Dendritic cell treated with granulocyte-macrophage colony-stimulating factor and Interleukin-4, amounts not matched to agents 40 ng/mL and 50 ng/mL, for 4 days (primary cell): ENCODE measurements at regions of chr6 and their contacts with region 1.

Region 1: GRCh38 chr6:73675466-73676098 is 20.4 kb upstream of the CD109 start:
- H3K4me3 Mint-ChIP-seq: no peak overlapping the region
- H3K27ac Mint-ChIP-seq: no peak overlapping the region
- H3K4me1 Mint-ChIP-seq: peaks cover 8% of the 10 kb centered on the region
- H3K27me3 Mint-ChIP-seq: no peaks in the 10 kb centered on the region

Region 2: DNA sequence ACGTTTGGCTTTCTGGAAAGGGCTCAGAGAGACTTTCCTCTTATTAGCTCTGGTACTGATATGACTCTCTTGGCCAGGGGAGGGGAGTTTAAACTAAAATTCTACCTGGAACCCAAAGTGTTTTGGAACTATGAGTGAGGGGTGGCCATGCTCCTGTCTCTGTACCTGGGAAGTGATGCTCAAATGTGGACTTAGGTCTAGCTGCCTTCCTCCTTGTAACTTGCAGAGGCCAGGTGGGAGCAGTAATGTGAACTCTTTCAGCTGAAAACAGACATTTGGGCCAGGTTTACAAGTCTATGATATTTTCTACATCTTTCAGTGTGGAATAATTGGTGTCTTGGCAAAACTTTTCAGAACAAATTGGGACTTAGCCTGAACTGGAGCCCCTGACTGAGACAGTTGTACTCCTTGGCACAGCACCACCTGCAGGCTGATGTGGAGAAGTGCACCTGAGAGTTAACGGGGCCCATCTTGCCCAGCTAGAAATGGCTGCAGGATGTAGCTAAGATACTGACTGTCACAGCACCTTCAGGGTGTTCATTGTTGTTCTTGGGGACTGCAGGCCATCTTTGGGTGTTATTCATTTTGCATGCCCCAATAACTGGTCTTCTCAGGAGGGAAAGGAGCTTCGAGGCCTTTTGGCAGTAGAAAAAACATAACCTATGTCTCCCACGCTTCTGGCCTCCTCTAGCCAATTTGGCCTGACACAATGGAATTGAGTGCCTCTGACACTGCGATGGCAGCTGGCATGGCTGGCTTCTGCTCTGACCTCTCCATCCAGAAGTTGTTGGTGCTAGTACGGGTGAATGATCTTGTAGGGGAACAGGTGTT is 57.5 kb after region 1 on chr6:
- intact Hi-C with region 1: loop called (anchors 1 kb)
- H3K4me3 Mint-ChIP-seq: no peak overlapping the region
- H3K27ac Mint-ChIP-seq: no peak overlapping the region
- H3K4me1 Mint-ChIP-seq: peaks cover 5% of the 10 kb centered on the region
- H3K27me3 Mint-ChIP-seq: no peaks in the 10 kb centered on the region